Naive thymus-derived CD4-positive, alpha-beta T cell (primary cell): ENCODE measurements at regions of chr17 and their contacts with region 1.

Region 1: GRCh38 chr17:59619293-59620063 is at the start of gene CLTC:
- DNase-seq: peak; percentile 89 to 96 (median 95)
- ATAC-seq: peak; percentile 91
- H3K4me3 ChIP-seq: peak within 1 kb of the TSS; percentile 80
- H3K4me3 Mint-ChIP-seq: peak within 1 kb of the TSS; percentile 92 to 100 (median 96)
- H3K27ac ChIP-seq: peak within 1 kb of the TSS; percentile 94
- H3K27ac Mint-ChIP-seq: peak within 1 kb of the TSS; percentile 94 to 100 (median 99)
- H3K4me1 ChIP-seq: peaks cover 12 to 32% of the 10 kb centered on the region in 2 donors
- H3K4me1 Mint-ChIP-seq: peaks cover 23 to 60% (median 51%) of the 10 kb centered on the region in 7 donors
- H3K27me3 ChIP-seq: no peaks in the 10 kb centered on the region
- H3K27me3 Mint-ChIP-seq: peaks cover 0 to 3% (median 0%) of the 10 kb centered on the region in 5 donors
- total RNA-seq, gene CLTC: 67.1 to 174 (median 88.4) TPM

Region 2: DNA sequence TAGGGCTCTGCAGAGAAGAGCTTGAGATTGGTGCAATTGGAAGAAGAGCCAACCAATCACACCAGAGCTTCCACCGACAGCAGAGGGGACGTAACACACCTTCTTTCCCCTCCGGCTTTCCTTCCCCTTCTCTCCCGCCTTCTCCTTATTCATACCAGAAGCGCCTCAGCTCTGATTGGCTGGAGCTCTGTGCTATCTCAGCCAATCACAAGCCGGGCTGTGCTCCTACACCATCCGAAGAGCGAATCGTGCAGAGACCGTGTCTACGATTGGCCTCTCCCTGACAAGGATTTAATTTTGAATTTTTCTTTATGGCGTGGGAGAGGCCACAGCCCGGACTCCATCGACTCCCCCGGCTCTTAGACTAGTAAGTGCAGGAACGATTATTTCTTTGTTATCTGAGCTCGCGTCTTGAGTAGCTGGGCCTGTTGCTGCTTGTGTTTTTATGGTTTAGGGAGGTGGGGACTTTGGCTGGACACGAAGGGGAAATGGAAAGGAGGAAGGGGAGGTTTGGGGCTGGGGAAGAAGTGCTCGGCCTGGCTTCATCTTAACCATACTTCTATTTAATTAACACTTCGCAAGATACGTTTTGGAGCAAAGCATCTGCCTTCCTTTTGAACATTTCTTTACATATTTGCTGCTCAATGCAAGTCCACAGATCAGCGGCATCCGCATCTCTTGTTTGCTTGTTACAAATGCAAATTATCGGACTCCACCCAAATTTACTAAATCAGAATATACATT is 463.9 kb before region 1 on chr17 and contains the start of gene PRR11:
- CTCF ChIA-PET with region 1: no interaction called
- POLR2A ChIA-PET with region 1: no interaction called
- intact Hi-C with region 1: loop called (anchors 1 kb)
- DNase-seq: peak in 6 of 9 donors; percentile 62 to 99 (median 98)
- ATAC-seq: peak; percentile 91
- H3K4me3 ChIP-seq: peak within 1 kb of the TSS; percentile 89
- H3K4me3 Mint-ChIP-seq: no peak within 1 kb of the TSS
- H3K27ac ChIP-seq: peak within 1 kb of the TSS; percentile 75
- H3K27ac Mint-ChIP-seq: no peak within 1 kb of the TSS
- H3K4me1 ChIP-seq: peaks cover 10 to 13% of the 10 kb centered on the region in 2 donors
- H3K4me1 Mint-ChIP-seq: peaks cover 8 to 52% (median 36%) of the 10 kb centered on the region in 7 donors
- H3K27me3 ChIP-seq: no peaks in the 10 kb centered on the region
- H3K27me3 Mint-ChIP-seq: no peaks in the 10 kb centered on the region
- total RNA-seq, gene PRR11: 0.61 to 41.9 (median 1.00) TPM

Region 3: DNA sequence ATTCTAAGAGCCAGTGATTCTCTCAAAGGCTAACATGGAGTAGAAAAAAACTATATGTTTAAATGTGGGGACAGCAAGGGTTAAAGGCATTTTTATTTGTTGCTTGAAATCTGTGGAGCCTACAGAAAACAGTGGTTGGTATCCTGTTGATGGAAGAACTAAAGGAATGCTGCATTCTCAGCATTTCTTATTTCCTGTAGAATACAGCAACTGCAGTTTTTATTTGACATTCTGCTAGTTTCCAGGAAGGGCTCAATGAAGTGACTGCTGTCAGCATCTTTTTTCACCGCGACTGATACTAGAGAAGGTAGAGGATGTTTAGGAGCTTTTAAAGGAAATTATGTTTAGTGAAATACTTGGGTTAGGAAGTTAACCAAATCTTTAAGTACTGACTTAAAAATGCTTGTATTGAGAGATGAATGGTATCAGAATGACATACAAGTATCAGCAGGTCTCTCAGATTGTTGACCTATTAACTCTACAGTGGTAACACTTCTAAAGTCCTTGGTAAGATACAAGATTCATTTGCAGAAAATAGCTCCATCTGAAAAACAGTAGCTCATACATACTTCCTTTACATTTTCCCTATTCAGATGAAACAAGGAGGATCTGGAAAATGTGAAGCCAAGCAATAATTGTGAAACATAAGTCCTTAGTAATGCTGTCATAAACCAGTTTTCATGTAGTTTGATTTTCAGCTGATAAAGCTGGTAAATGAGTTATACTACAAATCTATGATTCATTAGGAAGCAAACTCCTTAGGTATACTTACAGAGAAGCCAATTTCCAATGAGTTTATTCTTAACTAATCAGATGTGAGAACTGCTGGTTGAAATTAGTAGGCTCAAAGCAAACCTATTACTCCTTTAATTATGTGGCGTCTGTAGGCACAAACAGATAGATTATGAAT is 15.4 kb after region 1 on chr17:
- CTCF ChIA-PET with region 1: no interaction called
- POLR2A ChIA-PET with region 1: interaction called, 14 read pairs
- intact Hi-C with region 1: loop called (anchors 1 kb)
- DNase-seq: no peak
- ATAC-seq: no peak
- H3K4me3 ChIP-seq: no peak overlapping the region
- H3K4me3 Mint-ChIP-seq: peak overlapping the region in 7 of 10 donors; percentile 21 to 62 (median 32)
- H3K27ac ChIP-seq: no peak overlapping the region
- H3K27ac Mint-ChIP-seq: peak overlapping the region in 5 of 9 donors; percentile 17 to 75 (median 48)
- H3K4me1 ChIP-seq: peaks cover 37 to 44% of the 10 kb centered on the region in 2 donors
- H3K4me1 Mint-ChIP-seq: peaks cover 29 to 74% (median 63%) of the 10 kb centered on the region in 7 donors
- H3K27me3 ChIP-seq: no peaks in the 10 kb centered on the region
- H3K27me3 Mint-ChIP-seq: no peaks in the 10 kb centered on the region

Region 4: DNA sequence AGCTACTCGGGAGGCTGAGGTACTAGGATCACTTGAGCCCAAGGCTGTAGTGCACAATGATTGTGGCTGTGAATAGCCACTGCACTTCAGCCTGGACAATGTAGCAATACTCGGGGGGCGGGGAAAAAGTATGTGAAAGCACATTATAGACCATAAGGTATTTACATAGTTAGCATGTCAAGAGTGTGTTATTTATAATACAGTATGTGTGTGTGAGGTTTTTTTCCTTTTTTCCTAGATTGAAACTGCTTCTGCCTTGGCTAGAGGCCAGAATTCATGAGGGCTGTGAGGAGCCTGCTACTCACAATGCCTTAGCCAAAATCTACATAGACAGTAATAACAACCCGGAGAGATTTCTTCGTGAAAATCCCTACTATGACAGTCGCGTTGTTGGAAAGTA is 57.2 kb after region 1 on chr17:
- CTCF ChIA-PET with region 1: no interaction called
- POLR2A ChIA-PET with region 1: interaction called, 11 read pairs
- intact Hi-C with region 1: loop called in 1 of 2 experiments (anchors 2 kb)
- DNase-seq: no peak
- ATAC-seq: no peak
- H3K4me3 ChIP-seq: no peak overlapping the region
- H3K4me3 Mint-ChIP-seq: no peak overlapping the region
- H3K27ac ChIP-seq: no peak overlapping the region
- H3K27ac Mint-ChIP-seq: peak overlapping the region in 3 of 9 donors; percentile 11 to 22 (median 20)
- H3K4me1 ChIP-seq: no peaks in the 10 kb centered on the region
- H3K4me1 Mint-ChIP-seq: peaks cover 0 to 5% (median 1%) of the 10 kb centered on the region in 7 donors
- H3K27me3 ChIP-seq: no peaks in the 10 kb centered on the region
- H3K27me3 Mint-ChIP-seq: no peaks in the 10 kb centered on the region

Region 5: DNA sequence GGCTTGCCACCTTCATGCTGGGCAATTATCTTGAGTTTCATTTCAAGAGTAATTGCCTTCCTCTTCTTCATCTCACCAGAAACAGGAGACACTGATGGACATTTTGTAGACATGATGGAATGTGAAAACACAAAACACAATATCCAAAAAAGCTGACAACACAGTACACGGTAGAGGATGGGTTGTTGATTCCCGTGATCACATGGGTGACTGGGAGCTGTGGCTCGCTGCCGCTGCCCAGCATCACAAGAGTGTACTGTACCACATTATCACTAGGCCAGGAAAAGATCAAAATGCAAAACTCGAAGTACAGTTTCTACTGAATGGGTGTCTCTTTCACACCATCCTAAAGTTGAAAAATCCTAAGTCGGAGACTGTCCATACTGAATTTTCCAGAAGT is 80.3 kb after region 1 on chr17:
- CTCF ChIA-PET with region 1: no interaction called
- POLR2A ChIA-PET with region 1: no interaction called
- intact Hi-C with region 1: no loop called
- DNase-seq: no peak
- ATAC-seq: no peak
- H3K4me3 ChIP-seq: no peak overlapping the region
- H3K4me3 Mint-ChIP-seq: no peak overlapping the region
- H3K27ac ChIP-seq: no peak overlapping the region
- H3K27ac Mint-ChIP-seq: peak overlapping the region in 3 of 9 donors; percentile 3 to 60 (median 55)
- H3K4me1 ChIP-seq: peaks cover 0 to 12% of the 10 kb centered on the region in 2 donors
- H3K4me1 Mint-ChIP-seq: peaks cover 25 to 73% (median 65%) of the 10 kb centered on the region in 7 donors
- H3K27me3 ChIP-seq: no peaks in the 10 kb centered on the region
- H3K27me3 Mint-ChIP-seq: no peaks in the 10 kb centered on the region

Region 6: GRCh38 chr17:59837308-59838051 is 218.0 kb after region 1 on chr17:
- CTCF ChIA-PET with region 1: no interaction called
- POLR2A ChIA-PET with region 1: interaction called, 3 read pairs
- intact Hi-C with region 1: loop called (anchors 2 to 5 kb)
- DNase-seq: peak in 8 of 9 donors; percentile 51 to 91 (median 74)
- ATAC-seq: peak; percentile 94
- H3K4me3 ChIP-seq: peak overlapping the region; percentile 72
- H3K4me3 Mint-ChIP-seq: peak overlapping the region; percentile 83 to 100 (median 95)
- H3K27ac ChIP-seq: peak overlapping the region; percentile 88
- H3K27ac Mint-ChIP-seq: peak overlapping the region; percentile 90 to 99 (median 96)
- H3K4me1 ChIP-seq: peaks cover 6 to 14% of the 10 kb centered on the region in 2 donors
- H3K4me1 Mint-ChIP-seq: peaks cover 14 to 69% (median 49%) of the 10 kb centered on the region in 7 donors
- H3K27me3 ChIP-seq: no peaks in the 10 kb centered on the region
- H3K27me3 Mint-ChIP-seq: peaks cover 0 to 17% (median 0%) of the 10 kb centered on the region in 5 donors

Region 7: DNA sequence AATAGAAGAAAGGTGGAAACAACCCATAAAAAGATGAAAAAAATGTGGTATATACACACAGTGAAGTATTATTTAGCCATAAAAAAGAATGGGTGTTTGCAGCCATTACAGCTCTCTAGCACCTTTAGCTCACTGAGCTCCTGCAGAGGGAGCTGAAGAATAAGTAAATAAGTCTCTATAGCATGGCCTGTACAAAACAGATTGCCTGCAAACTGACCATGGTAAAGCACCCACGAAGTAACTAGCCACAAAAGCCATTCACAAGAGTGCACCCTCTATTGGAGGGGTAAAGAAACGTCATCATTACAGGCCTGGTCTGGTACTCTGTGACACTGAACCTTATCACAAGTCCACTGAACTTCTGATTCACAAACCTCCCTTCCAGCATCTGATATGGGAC is 696.2 kb after region 1 on chr17:
- CTCF ChIA-PET with region 1: no interaction called
- POLR2A ChIA-PET with region 1: no interaction called
- intact Hi-C with region 1: no loop called
- DNase-seq: no peak
- ATAC-seq: no peak
- H3K4me3 ChIP-seq: no peak overlapping the region
- H3K4me3 Mint-ChIP-seq: no peak overlapping the region
- H3K27ac ChIP-seq: no peak overlapping the region
- H3K27ac Mint-ChIP-seq: no peak overlapping the region
- H3K4me1 ChIP-seq: no peaks in the 10 kb centered on the region
- H3K4me1 Mint-ChIP-seq: peaks cover 14 to 29% (median 23%) of the 10 kb centered on the region in 7 donors
- H3K27me3 ChIP-seq: no peaks in the 10 kb centered on the region
- H3K27me3 Mint-ChIP-seq: no peaks in the 10 kb centered on the region

Region 8: GRCh38 chr17:60392042-60392844 is 772.8 kb after region 1 on chr17 and contains the start of gene USP32:
- CTCF ChIA-PET with region 1: no interaction called
- POLR2A ChIA-PET with region 1: interaction called, 3 read pairs
- intact Hi-C with region 1: loop called (anchors 1 to 5 kb)
- DNase-seq: peak; percentile 94 to 98 (median 96)
- ATAC-seq: peak; percentile 95
- H3K4me3 ChIP-seq: peak within 1 kb of the TSS; percentile 97
- H3K4me3 Mint-ChIP-seq: peak within 1 kb of the TSS; percentile 93 to 99 (median 96)
- H3K27ac ChIP-seq: peak within 1 kb of the TSS; percentile 92
- H3K27ac Mint-ChIP-seq: peak within 1 kb of the TSS; percentile 92 to 99 (median 97)
- H3K4me1 ChIP-seq: peaks cover 5 to 18% of the 10 kb centered on the region in 2 donors
- H3K4me1 Mint-ChIP-seq: peaks cover 30 to 55% (median 41%) of the 10 kb centered on the region in 7 donors
- H3K27me3 ChIP-seq: no peaks in the 10 kb centered on the region
- H3K27me3 Mint-ChIP-seq: no peaks in the 10 kb centered on the region
- total RNA-seq, gene USP32: 31.6 to 58.1 (median 35.4) TPM